ENCODE measurements at regions of chr3 and their contacts with region 1.

Region 1: GRCh38 chr3:47404955-47405790 is 24.4 kb downstream of the PTPN23 start:
- DNase-seq: no peak
- H3K4me3 ChIP-seq: no peak overlapping the region
- H3K27ac ChIP-seq: peak overlapping the region; percentile 31
- H3K27me3 ChIP-seq: no peaks in the 10 kb centered on the region
- CTCF ChIP-seq: no peak

Region 2: GRCh38 chr3:47428662-47429061 is 23.5 kb after region 1 on chr3:
- CTCF ChIA-PET with region 1: no interaction called
- POLR2A ChIA-PET with region 1: no interaction called
- DNase-seq: no peak
- H3K4me3 ChIP-seq: no peak overlapping the region
- H3K27ac ChIP-seq: no peak overlapping the region
- H3K27me3 ChIP-seq: no peaks in the 10 kb centered on the region
- CTCF ChIP-seq: no peak

Region 3: GRCh38 chr3:47513125-47513929 is 108.2 kb after region 1 on chr3 and contains the start of gene ELP6:
- CTCF ChIA-PET with region 1: interaction called, 11 read pairs
- POLR2A ChIA-PET with region 1: no interaction called
- DNase-seq: peak; percentile 91
- H3K4me3 ChIP-seq: peak within 1 kb of the TSS; percentile 70
- H3K27ac ChIP-seq: peak within 1 kb of the TSS; percentile 85
- H3K27me3 ChIP-seq: no peaks in the 10 kb centered on the region
- CTCF ChIP-seq: peak; percentile 50
- polyA plus RNA-seq, gene ELP6: 40.0 and 46.6 TPM in 2 replicates